MCF 10A (cell line): ENCODE measurements at regions of chr6 and their contacts with region 1.

Region 1: GRCh38 chr6:8102122-8102958 is at the start of gene EEF1E1:
- DNase-seq: peak; percentile 96
- H3K4me3 Mint-ChIP-seq: peak within 1 kb of the TSS; percentile 92
- H3K27ac Mint-ChIP-seq: peak within 1 kb of the TSS; percentile 92
- H3K4me1 Mint-ChIP-seq: peaks cover 21% of the 10 kb centered on the region
- H3K27me3 Mint-ChIP-seq: no peaks in the 10 kb centered on the region
- CTCF ChIP-seq: no peak
- total RNA-seq, gene EEF1E1: 52.1 and 56.7 TPM in 2 replicates

Region 2: GRCh38 chr6:8085053-8085511 is 17.3 kb before region 1 on chr6:
- CTCF ChIA-PET with region 1: no interaction called
- POLR2A ChIA-PET with region 1: interaction called, 44 read pairs
- intact Hi-C with region 1: loop called (anchors 1 kb)
- DNase-seq: peak; percentile 96
- H3K4me3 Mint-ChIP-seq: no peak overlapping the region
- H3K27ac Mint-ChIP-seq: peak overlapping the region; percentile 75
- H3K4me1 Mint-ChIP-seq: peaks cover 30% of the 10 kb centered on the region
- H3K27me3 Mint-ChIP-seq: no peaks in the 10 kb centered on the region
- CTCF ChIP-seq: no peak

Region 3: GRCh38 chr6:8149350-8149749 is 47.0 kb after region 1 on chr6:
- CTCF ChIA-PET with region 1: no interaction called
- POLR2A ChIA-PET with region 1: no interaction called
- intact Hi-C with region 1: no loop called
- DNase-seq: peak; percentile 8
- H3K4me3 Mint-ChIP-seq: no peak overlapping the region
- H3K27ac Mint-ChIP-seq: no peak overlapping the region
- H3K4me1 Mint-ChIP-seq: no peaks in the 10 kb centered on the region
- H3K27me3 Mint-ChIP-seq: no peaks in the 10 kb centered on the region
- CTCF ChIP-seq: no peak